Endothelial cell of umbilical vein (primary cell): ENCODE measurements at regions of chrX and their contacts with region 1.

Region 1: GRCh38 chrX:131841496-131842410 is 181.3 kb upstream of the STK26 start:
- DNase-seq: peak; percentile 19
- H3K4me3 ChIP-seq: no peak overlapping the region
- H3K27ac ChIP-seq: no peak overlapping the region
- H3K4me1 ChIP-seq: no peaks in the 10 kb centered on the region
- H3K27me3 ChIP-seq: no peaks in the 10 kb centered on the region
- CTCF ChIP-seq: peak; percentile 59 to 61
- POLR2A ChIP-seq: no peak

Region 2: GRCh38 chrX:131854581-131854980 is 12.8 kb after region 1 on chrX:
- CTCF ChIA-PET with region 1: interaction called, 12 read pairs
- POLR2A ChIA-PET with region 1: no interaction called
- dilution Hi-C with region 1: no loop called
- intact Hi-C with region 1: no loop called
- DNase-seq: peak; percentile 20
- H3K4me3 ChIP-seq: no peak overlapping the region
- H3K27ac ChIP-seq: no peak overlapping the region
- H3K4me1 ChIP-seq: no peaks in the 10 kb centered on the region
- H3K27me3 ChIP-seq: no peaks in the 10 kb centered on the region
- CTCF ChIP-seq: no peak
- POLR2A ChIP-seq: no peak

Region 3: GRCh38 chrX:131874300-131874699 is 32.5 kb after region 1 on chrX:
- CTCF ChIA-PET with region 1: no interaction called
- POLR2A ChIA-PET with region 1: no interaction called
- dilution Hi-C with region 1: no loop called
- intact Hi-C with region 1: no loop called
- DNase-seq: no peak
- H3K4me3 ChIP-seq: no peak overlapping the region
- H3K27ac ChIP-seq: no peak overlapping the region
- H3K4me1 ChIP-seq: no peaks in the 10 kb centered on the region
- H3K27me3 ChIP-seq: no peaks in the 10 kb centered on the region
- CTCF ChIP-seq: no peak
- POLR2A ChIP-seq: no peak

Region 4: DNA sequence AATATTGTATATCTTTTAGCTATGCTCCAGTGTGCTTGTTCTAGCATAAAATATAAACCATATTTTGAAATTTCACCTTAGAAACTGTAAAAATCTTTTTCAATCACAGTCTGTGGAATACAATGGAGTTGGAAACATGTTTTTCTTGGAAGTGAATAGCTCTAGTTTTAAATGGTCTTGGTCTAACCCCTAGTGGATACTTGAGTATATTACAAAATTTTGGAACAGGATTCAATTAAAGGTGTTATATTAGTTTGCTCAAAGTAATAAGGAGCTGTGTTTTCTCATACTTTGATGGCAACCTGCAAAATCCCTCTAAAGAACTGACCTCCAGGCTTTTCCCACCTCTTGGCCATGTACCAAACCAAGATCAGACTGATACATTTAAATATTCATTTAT is 229.5 kb after region 1 on chrX:
- CTCF ChIA-PET with region 1: interaction called, 48 read pairs
- POLR2A ChIA-PET with region 1: no interaction called
- dilution Hi-C with region 1: no loop called
- intact Hi-C with region 1: loop called (anchors 1 kb)
- DNase-seq: peak; percentile 31
- H3K4me3 ChIP-seq: no peak overlapping the region
- H3K27ac ChIP-seq: no peak overlapping the region
- H3K4me1 ChIP-seq: no peaks in the 10 kb centered on the region
- H3K27me3 ChIP-seq: no peaks in the 10 kb centered on the region
- CTCF ChIP-seq: no peak
- POLR2A ChIP-seq: no peak

Region 5: DNA sequence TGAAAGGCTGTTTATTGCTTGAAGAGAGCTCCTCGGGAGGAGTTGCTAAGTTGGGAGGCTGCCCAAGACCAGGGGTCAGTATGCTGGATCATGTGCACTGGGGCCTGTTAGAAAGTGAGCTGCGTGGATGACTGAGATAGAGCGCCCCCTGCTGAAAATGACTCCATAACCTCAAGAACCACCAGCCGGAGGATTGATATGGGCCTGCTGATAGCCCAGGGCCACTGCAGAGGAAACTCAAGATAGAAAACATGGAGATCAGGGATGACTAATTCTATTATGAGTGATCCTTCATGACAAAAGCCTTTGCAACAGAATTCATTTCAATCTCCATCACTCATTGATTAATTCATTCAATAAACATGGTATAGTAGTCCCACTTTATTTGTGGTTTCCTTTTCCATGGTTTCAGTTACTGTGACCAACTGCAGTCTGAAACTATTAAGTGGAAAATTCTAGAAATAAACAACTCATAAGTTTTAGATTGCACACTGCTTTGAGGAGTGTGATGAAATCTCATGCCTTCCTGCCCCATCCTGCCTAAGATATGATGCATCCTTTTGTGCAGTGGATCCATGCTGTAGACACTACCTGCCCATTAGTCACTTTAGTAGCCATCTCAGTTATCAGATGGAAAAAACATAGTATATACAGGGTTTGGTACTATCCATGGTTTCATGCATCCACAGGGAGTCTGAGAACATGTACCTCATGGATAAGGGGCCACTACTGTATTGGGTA is 773.8 kb after region 1 on chrX:
- CTCF ChIA-PET with region 1: interaction called, 16 read pairs
- POLR2A ChIA-PET with region 1: no interaction called
- dilution Hi-C with region 1: no loop called
- intact Hi-C with region 1: no loop called
- DNase-seq: peak; percentile 34
- H3K4me3 ChIP-seq: no peak overlapping the region
- H3K27ac ChIP-seq: no peak overlapping the region
- H3K4me1 ChIP-seq: no peaks in the 10 kb centered on the region
- H3K27me3 ChIP-seq: no peaks in the 10 kb centered on the region
- CTCF ChIP-seq: peak; percentile 23 to 41
- POLR2A ChIP-seq: no peak

Region 6: GRCh38 chrX:132631579-132632232 is 790.0 kb after region 1 on chrX:
- CTCF ChIA-PET with region 1: interaction called, 14 read pairs
- POLR2A ChIA-PET with region 1: no interaction called
- dilution Hi-C with region 1: no loop called
- intact Hi-C with region 1: loop called (anchors 5 kb)
- DNase-seq: peak; percentile 33
- H3K4me3 ChIP-seq: no peak overlapping the region
- H3K27ac ChIP-seq: no peak overlapping the region
- H3K4me1 ChIP-seq: no peaks in the 10 kb centered on the region
- H3K27me3 ChIP-seq: no peaks in the 10 kb centered on the region
- CTCF ChIP-seq: peak; percentile 27 to 30
- POLR2A ChIP-seq: no peak